ENCODE measurements at regions of chr10 and their contacts with region 1.

Region 1: GRCh38 chr10:33463011-33463410 is 128.5 kb upstream of the NRP1 start:
- DNase-seq: no peak
- ATAC-seq: no peak

Region 2: DNA sequence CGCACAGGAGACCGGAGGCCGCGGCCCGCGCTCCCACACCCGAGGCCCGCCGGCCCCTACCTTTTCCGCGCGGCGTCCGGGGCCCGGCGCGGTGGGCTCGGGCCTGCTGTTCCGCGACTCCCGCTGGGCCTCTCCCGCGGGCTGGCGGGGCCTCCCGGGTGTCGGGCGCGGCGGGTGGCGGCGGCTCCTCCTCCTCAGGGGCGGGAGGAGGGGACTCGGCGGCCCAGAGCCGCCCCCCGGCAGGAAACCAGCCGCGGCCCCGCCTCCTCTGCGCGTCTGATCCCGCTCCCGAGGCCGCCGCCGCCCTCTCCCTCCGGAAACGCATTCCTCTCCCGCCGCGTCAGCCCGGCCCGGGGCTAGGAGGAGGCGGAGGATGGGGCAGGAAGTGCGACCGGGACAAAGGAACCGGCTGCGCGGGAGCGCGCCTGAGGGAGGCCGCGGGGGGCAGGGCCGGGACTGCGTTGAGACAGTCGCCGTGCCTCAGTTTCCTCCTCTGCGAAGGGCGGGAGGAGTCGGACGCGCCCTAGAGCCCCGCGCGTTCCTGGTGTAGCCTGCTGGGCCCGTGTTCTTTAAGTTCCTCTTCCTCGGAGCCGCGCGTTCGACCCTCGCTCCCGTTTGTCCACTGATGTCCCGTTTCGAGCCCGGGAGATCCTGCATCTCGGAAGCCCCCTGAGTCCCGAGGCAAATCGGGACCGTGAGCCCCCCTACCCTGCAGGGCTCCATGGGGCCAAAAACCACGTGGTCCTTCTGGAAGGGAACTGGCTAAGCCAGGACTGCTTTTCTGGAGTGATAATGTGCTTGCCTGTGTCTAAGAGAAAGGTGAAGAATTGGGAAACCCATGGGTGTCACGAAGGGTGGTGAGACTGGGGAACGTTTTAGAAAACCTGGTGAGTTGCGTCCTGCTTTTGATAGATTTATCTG is 504.7 kb before region 1 on chr10 and contains the start of gene ITGB1:
- intact Hi-C with region 1: no loop called
- DNase-seq: peak; percentile 99
- ATAC-seq: peak; percentile 95
- total RNA-seq, gene ITGB1: 551 TPM

Region 3: DNA sequence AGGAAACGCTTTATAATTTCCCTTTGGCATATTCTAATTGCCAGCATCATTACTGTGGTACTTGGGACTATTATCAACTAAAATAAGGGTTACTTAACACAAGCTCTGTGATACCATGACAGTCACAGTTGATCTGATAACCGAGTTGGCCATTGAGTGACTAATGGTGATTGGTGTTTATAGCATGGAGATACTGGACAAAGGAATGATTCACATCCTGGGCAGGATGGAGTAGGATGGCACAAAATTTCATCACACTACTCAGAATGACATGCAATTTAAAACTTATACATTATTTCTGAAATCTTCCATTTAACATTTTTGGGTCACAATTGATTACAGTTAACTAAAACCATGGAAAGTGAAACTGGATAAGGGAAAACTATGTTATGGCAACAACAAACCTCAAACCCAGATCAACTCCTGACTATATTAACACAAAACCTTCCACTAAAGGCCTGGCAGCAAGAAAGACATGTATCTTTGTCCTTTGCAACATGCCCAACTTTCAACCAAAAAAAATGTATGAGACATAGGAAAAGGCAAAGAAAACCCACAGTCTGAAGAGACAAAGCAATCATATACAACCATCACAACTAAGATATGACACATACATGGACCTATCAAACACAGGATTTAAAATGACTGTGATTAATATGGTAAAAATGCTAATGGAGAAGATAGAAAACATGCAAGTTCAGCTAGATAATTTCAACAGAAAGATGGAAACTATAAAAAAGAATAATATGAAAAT is 79.9 kb after region 1 on chr10:
- intact Hi-C with region 1: loop called (anchors 2 kb)
- DNase-seq: no peak
- ATAC-seq: no peak

Measured in left ventricle myocardium superior (tissue), 1 donor.